ENCODE measurements at regions of chr2 and their contacts with region 1.

Region 1: DNA sequence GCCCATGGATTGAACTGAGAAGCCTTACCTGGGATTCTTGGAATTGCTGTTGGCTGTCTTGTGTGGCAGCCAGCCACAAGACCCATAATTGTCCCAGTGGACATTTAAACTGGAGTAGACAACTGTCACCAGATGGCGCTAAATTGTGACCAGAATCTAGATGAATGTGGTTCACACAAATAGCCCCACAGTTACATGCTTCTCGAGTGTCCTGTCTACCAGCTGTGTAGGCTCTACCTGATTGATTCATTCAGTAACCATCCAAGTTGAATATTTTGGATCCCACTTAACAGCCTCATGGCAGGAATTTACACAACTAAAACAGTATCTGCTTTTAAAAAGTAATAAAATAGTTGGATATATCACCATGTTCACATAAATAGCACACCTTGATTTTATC is 73.2 kb downstream of the MAP4K4 start:
- DNase-seq: peak; percentile 58
- H3K4me3 ChIP-seq: no peak overlapping the region
- H3K27ac ChIP-seq: peak overlapping the region; percentile 5
- H3K4me1 ChIP-seq: peaks cover 68% of the 10 kb centered on the region
- H3K27me3 ChIP-seq: no peaks in the 10 kb centered on the region
- CTCF ChIP-seq: peak in 1 of 2 donors; percentile 28
- POLR2A ChIP-seq: no peak

Region 2: DNA sequence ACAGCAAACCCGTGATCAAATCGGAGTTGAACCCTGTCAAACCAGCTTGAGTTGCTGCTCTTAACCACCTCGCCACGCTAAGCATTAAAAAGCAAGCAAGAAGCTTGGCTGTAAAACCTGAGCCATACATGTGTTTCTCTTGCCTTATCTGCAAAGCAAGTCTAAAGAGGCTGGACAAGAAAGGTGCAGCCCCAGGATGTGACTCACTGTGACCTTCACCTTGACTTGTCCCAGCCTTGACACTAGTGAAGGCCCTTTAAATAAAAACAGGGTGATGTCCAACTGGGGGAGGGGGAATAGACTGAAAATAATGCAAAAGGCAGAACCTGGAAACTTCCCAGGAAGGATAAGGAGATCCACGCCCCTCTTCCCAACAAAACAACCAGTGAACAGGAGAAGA is 1078.3 kb before region 1 on chr2:
- CTCF ChIA-PET with region 1: no interaction called
- POLR2A ChIA-PET with region 1: no interaction called
- dilution Hi-C with region 1: no loop called
- intact Hi-C with region 1: no loop called
- DNase-seq: no peak
- H3K4me3 ChIP-seq: no peak overlapping the region
- H3K27ac ChIP-seq: no peak overlapping the region
- H3K4me1 ChIP-seq: no peaks in the 10 kb centered on the region
- H3K27me3 ChIP-seq: peaks cover 8 to 11% of the 10 kb centered on the region in 2 experiments
- CTCF ChIP-seq: no peak
- POLR2A ChIP-seq: no peak

Region 3: GRCh38 chr2:101697124-101698013 is 73.4 kb before region 1 on chr2 and contains the start of gene MAP4K4:
- CTCF ChIA-PET with region 1: interaction called, 19 read pairs
- POLR2A ChIA-PET with region 1: interaction called, 13 read pairs
- dilution Hi-C with region 1: no loop called
- intact Hi-C with region 1: loop called (anchors 2 kb)
- DNase-seq: peak; percentile 67
- H3K4me3 ChIP-seq: peak within 1 kb of the TSS; percentile 55 to 98 (median 96)
- H3K27ac ChIP-seq: peak within 1 kb of the TSS; percentile 85
- H3K4me1 ChIP-seq: peaks cover 20% of the 10 kb centered on the region
- H3K27me3 ChIP-seq: no peaks in the 10 kb centered on the region
- CTCF ChIP-seq: peak in 1 of 2 donors; percentile 11
- POLR2A ChIP-seq: peak; percentile 88
- total RNA-seq, gene MAP4K4: 251 and 269 TPM in 2 replicates

Region 4: GRCh38 chr2:101751875-101752619 is 18.7 kb before region 1 on chr2:
- CTCF ChIA-PET with region 1: interaction called, 20 read pairs
- POLR2A ChIA-PET with region 1: no interaction called
- dilution Hi-C with region 1: no loop called
- intact Hi-C with region 1: no loop called
- DNase-seq: no peak
- H3K4me3 ChIP-seq: no peak overlapping the region
- H3K27ac ChIP-seq: no peak overlapping the region
- H3K4me1 ChIP-seq: peaks cover 39% of the 10 kb centered on the region
- H3K27me3 ChIP-seq: no peaks in the 10 kb centered on the region
- CTCF ChIP-seq: no peak
- POLR2A ChIP-seq: no peak

Region 5: DNA sequence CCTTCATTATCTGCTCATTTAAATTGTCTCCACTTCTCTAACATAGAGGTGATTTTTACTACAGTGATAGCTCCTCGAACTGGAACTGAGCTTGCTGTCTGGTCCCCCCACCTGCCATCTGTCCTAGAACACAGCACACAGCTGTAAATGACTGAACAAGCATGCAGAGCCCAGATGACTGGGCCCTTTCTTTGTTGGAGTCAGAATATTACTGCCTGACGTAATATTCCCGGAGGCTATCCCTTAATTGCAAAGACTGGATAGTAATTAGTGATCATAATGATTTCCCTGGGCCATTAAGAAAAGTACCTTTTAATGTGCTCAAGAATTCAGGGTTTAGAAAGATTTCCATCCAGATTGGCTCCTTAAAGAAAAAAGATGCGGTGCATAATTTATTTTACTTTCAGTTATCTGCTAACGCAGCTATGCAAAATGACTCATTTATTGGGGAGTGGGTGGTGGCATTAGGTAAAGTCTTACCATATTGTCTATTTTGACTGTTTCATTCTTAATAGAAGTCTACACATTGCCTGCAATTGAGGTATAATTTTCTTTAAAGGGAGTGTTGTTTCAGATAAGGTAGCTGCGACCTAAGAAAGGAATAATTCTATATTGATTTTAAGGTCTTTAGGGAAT is 11.2 kb after region 1 on chr2:
- CTCF ChIA-PET with region 1: interaction called, 14 read pairs
- POLR2A ChIA-PET with region 1: interaction called, 3 read pairs
- dilution Hi-C with region 1: no loop called
- intact Hi-C with region 1: no loop called
- DNase-seq: no peak
- H3K4me3 ChIP-seq: no peak overlapping the region
- H3K27ac ChIP-seq: no peak overlapping the region
- H3K4me1 ChIP-seq: peaks cover 6% of the 10 kb centered on the region
- H3K27me3 ChIP-seq: no peaks in the 10 kb centered on the region
- CTCF ChIP-seq: no peak
- POLR2A ChIP-seq: no peak

Region 6: DNA sequence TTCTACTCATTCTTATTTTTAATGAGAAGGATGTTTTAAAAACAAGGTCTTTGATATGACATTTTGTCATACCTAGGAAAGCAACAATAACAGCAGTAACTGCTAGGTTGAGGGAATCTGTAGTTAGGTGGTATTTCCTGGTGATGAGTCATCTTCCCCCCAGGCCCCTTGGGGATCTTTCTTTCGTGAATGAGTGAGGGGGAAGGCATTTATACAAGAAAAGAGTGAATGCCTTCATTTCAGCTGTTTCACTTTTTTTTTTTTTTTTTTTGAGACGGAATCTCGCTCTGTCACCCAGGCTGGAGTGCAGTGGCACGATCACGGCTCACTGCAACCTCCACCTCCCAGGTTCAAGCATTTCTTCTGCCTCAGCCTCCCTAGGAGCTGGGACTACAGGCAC is 35.4 kb after region 1 on chr2:
- CTCF ChIA-PET with region 1: interaction called, 3 read pairs
- POLR2A ChIA-PET with region 1: no interaction called
- dilution Hi-C with region 1: no loop called
- intact Hi-C with region 1: loop called (anchors 5 kb)
- DNase-seq: peak; percentile 83
- H3K4me3 ChIP-seq: peak overlapping the region in 1 of 3 experiments; percentile 10
- H3K27ac ChIP-seq: peak overlapping the region; percentile 36
- H3K4me1 ChIP-seq: peaks cover 46% of the 10 kb centered on the region
- H3K27me3 ChIP-seq: no peaks in the 10 kb centered on the region
- CTCF ChIP-seq: no peak
- POLR2A ChIP-seq: no peak

Region 7: DNA sequence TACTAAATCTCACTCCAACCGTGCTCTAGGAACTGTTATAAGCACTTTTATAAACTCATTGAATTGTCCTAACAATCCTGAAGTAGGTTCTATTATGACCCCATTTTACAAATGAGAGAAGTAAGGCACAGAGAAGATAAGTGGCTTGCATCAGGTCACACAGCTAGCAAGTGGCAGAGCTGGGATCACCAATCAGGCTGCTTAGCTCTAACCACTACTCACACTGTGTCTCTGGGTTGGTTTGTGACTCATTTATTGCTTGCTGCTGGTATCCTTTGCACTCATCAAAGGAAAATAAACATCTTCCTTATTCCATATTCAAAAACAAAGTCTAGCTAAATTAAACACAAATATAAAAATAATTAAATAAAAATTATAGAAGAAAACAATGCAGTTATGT is 178.6 kb after region 1 on chr2:
- CTCF ChIA-PET with region 1: no interaction called
- POLR2A ChIA-PET with region 1: no interaction called
- dilution Hi-C with region 1: no loop called
- intact Hi-C with region 1: no loop called
- DNase-seq: no peak
- H3K4me3 ChIP-seq: no peak overlapping the region
- H3K27ac ChIP-seq: no peak overlapping the region
- H3K4me1 ChIP-seq: no peaks in the 10 kb centered on the region
- H3K27me3 ChIP-seq: peaks cover 0 to 6% of the 10 kb centered on the region in 2 experiments
- CTCF ChIP-seq: no peak
- POLR2A ChIP-seq: no peak

Measured in endothelial cell of umbilical vein (primary cell).